HepG2 (cell line): ENCODE measurements at regions of chr9 and their contacts with region 1.

Region 1: DNA sequence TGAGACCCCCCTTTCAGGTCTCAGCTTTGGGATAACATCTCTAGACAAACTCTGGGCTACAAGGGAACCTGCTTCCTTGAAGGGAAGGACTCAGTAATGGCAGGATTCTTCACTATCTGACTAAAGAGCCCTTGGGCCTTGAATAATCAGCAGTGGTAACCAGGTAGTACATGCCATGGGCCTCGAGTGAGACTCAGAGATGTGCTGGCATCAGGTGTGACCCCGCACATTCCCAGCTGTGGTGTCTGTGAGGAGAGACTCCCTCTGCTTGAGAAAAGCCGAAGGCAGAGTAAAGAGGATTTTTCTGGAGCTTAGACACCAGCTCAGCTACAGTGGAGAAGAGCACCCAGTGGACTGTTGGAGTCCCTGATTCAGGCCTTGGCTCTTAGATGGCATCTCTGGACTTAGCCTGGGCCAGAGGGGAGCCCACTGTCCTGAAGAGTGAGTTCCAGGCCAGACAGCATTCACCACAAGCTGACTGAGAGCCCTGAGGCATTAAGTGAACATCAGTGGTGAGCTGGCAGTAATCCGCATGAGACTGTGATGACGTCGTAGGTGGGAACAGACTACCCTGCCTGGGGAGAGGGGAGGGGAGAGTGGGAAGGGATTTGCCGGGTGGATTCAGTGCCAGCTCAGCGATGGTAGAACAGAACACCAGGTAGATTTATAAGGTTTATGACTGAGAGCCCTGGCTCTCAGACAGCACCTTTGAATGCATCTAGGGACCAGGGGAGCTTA is 5.3 kb upstream of the ZNF782 start:
- DNase-seq: no peak
- ATAC-seq: no peak
- H3K4me3 ChIP-seq: no peak overlapping the region
- H3K27ac ChIP-seq: no peak overlapping the region
- H3K4me1 ChIP-seq: peaks cover 54% of the 10 kb centered on the region
- H3K27me3 ChIP-seq: no peaks in the 10 kb centered on the region
- CTCF ChIP-seq: no peak
- EP300 ChIP-seq: no peak
- POLR2A ChIP-seq: no peak
- RAD21 ChIP-seq: no peak

Region 2: GRCh38 chr9:96875461-96876364 is 16.1 kb after region 1 on chr9:
- CTCF ChIA-PET with region 1: interaction called, 3 read pairs
- POLR2A ChIA-PET with region 1: interaction called, 59 read pairs
- in situ Hi-C with region 1: no loop called
- intact Hi-C with region 1: loop called (anchors 1 kb)
- DNase-seq: peak; percentile 96
- ATAC-seq: peak; percentile 92
- H3K4me3 ChIP-seq: peak overlapping the region; percentile 53 to 74 (median 59)
- H3K27ac ChIP-seq: peak overlapping the region; percentile 71
- H3K4me1 ChIP-seq: peaks cover 18% of the 10 kb centered on the region
- H3K27me3 ChIP-seq: no peaks in the 10 kb centered on the region; a peak in 1 of 5 replicates
- CTCF ChIP-seq: peak; percentile 80
- EP300 ChIP-seq: no peak
- POLR2A ChIP-seq: peak in 1 of 2 experiments; percentile 75; a peak in 3 of 4 replicates
- RAD21 ChIP-seq: peak; percentile 39; the same call in 1 of the 2 replicates

Region 3: DNA sequence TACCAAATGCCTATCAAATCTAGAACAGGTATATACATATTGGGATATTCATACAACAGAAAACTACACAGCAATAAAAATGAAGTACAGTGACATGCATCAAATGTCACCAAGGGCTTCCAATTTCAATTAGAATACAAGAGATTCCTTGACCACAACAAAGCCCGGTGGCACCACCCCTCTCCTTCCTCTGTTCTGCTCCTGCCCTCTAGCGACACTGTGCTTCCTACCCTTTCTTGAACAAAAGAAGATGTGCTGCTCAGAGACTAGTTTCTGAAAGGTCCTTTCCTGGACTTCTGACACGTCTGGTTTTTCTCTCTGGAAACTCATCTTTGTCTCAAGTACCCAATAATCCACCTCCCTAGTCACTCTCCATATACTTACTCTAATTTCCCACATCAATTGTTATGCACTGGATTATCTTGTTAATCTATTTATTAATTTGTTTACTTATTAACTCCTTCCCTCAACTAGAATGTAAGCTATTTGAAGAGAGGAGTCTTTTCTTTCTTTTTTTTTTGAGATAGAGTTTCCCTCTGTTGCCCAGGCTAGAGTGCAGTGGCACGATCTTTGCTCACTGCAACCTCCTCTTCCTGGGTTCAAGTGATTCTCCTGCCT is 249.7 kb after region 1 on chr9:
- CTCF ChIA-PET with region 1: interaction called, 7 read pairs
- POLR2A ChIA-PET with region 1: no interaction called
- in situ Hi-C with region 1: loop called (anchors 10 kb)
- intact Hi-C with region 1: loop called (anchors 1 kb)
- DNase-seq: peak; percentile 64
- ATAC-seq: peak; percentile 87
- H3K4me3 ChIP-seq: no peak overlapping the region
- H3K27ac ChIP-seq: no peak overlapping the region
- H3K4me1 ChIP-seq: 0 out of 2 replicates have a peak, but pooled peaks cover 4% of the 10 kb centered on the region
- H3K27me3 ChIP-seq: 0 out of 5 replicates have a peak, but pooled peaks cover 0 to 6% of the 10 kb centered on the region in 2 experiments
- CTCF ChIP-seq: peak; percentile 74
- EP300 ChIP-seq: no peak
- POLR2A ChIP-seq: no peak
- RAD21 ChIP-seq: no peak